Activated CD4-positive, alpha-beta memory T cell treated with anti-CD3 and anti-CD28 coated beads for 36 hours (primary cell): ENCODE measurements at regions of chr1 and their contacts with region 1.

Region 1: GRCh38 chr1:212477014-212477679 is 44.4 kb downstream of the NENF start:
- DNase-seq: peak; percentile 87
- H3K4me3 Mint-ChIP-seq: peak overlapping the region; percentile 11
- H3K27ac Mint-ChIP-seq: no peak overlapping the region
- H3K4me1 Mint-ChIP-seq: peaks cover 14% of the 10 kb centered on the region
- H3K27me3 Mint-ChIP-seq: peaks cover 6% of the 10 kb centered on the region

Region 2: GRCh38 chr1:211928993-211929637 is 548.0 kb before region 1 on chr1:
- CTCF ChIA-PET with region 1: no interaction called
- POLR2A ChIA-PET with region 1: no interaction called
- intact Hi-C with region 1: no loop called
- DNase-seq: no peak
- H3K4me3 Mint-ChIP-seq: no peak overlapping the region
- H3K27ac Mint-ChIP-seq: no peak overlapping the region
- H3K4me1 Mint-ChIP-seq: no peaks in the 10 kb centered on the region
- H3K27me3 Mint-ChIP-seq: peaks cover 3% of the 10 kb centered on the region

Region 3: GRCh38 chr1:212401838-212402582 is 75.1 kb before region 1 on chr1:
- CTCF ChIA-PET with region 1: no interaction called
- POLR2A ChIA-PET with region 1: no interaction called
- intact Hi-C with region 1: no loop called
- DNase-seq: no peak
- H3K4me3 Mint-ChIP-seq: no peak overlapping the region
- H3K27ac Mint-ChIP-seq: no peak overlapping the region
- H3K4me1 Mint-ChIP-seq: peaks cover 16% of the 10 kb centered on the region
- H3K27me3 Mint-ChIP-seq: no peaks in the 10 kb centered on the region

Region 4: GRCh38 chr1:212440419-212440818 is 36.7 kb before region 1 on chr1:
- CTCF ChIA-PET with region 1: no interaction called
- POLR2A ChIA-PET with region 1: no interaction called
- intact Hi-C with region 1: no loop called
- DNase-seq: no peak
- H3K4me3 Mint-ChIP-seq: no peak overlapping the region
- H3K27ac Mint-ChIP-seq: no peak overlapping the region
- H3K4me1 Mint-ChIP-seq: peaks cover 7% of the 10 kb centered on the region
- H3K27me3 Mint-ChIP-seq: no peaks in the 10 kb centered on the region

Region 5: DNA sequence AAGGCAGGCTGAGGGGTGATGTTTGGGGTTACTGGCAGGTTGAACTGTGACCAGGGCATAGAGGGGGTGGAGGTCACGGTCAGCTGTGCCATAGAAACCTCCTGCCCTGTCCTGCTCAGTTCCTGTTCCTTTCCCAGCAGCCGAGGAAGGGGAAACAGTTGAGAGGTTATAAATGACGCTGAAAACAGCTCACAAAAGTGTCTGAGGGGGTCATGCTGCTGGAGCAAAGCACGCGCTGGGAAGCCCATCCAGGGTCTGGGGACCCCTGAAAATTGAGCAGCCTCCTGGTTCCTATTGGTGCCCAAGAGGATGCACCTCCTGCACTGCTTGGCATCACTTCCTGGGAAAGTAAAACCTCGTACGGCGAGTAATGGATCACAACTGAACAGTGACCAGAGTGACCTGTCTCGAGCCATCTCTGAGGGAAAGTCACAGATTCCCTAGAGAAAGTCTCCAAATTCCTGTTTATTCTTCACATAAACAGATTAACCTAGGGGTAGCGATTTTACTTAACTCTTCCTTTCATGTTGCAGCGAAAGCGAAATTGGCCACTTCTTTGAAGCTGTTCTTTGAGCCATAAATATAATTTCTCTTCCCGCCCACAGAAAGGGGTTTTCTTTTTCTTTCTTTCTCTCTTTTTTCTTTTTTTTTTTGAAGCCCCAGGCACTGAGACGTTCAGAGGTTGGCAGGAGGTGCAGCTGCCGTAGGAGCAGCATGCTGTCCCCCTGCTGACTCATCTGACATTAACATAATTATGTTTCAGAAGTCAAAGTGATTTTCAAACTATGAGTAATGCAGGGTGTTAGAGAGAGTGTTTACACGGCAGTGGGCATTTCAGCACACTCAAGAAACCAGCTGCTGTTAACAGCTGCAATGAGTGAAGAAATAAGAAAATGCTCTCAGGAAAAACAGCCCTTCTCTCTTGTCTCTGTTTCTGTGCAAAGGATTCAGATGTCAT is 89.7 kb after region 1 on chr1:
- CTCF ChIA-PET with region 1: interaction called, 4 read pairs
- POLR2A ChIA-PET with region 1: interaction called, 4 read pairs
- intact Hi-C with region 1: loop called (anchors 2 kb)
- DNase-seq: peak; percentile 79
- H3K4me3 Mint-ChIP-seq: peak overlapping the region; percentile 73
- H3K27ac Mint-ChIP-seq: peak overlapping the region; percentile 82
- H3K4me1 Mint-ChIP-seq: peaks cover 33% of the 10 kb centered on the region
- H3K27me3 Mint-ChIP-seq: peaks cover 2% of the 10 kb centered on the region

Region 6: GRCh38 chr1:212608209-212608955 is 131.2 kb after region 1 on chr1 and contains the start of gene ATF3:
- CTCF ChIA-PET with region 1: interaction called, 21 read pairs
- POLR2A ChIA-PET with region 1: interaction called, 7 read pairs
- intact Hi-C with region 1: loop called (anchors 2 kb)
- DNase-seq: peak; percentile 97
- H3K4me3 Mint-ChIP-seq: peak within 1 kb of the TSS; percentile 91
- H3K27ac Mint-ChIP-seq: peak within 1 kb of the TSS; percentile 90
- H3K4me1 Mint-ChIP-seq: peaks cover 52% of the 10 kb centered on the region
- H3K27me3 Mint-ChIP-seq: peaks cover 36% of the 10 kb centered on the region
- total RNA-seq, gene ATF3: 49.7 to 51.5 TPM

Region 7: DNA sequence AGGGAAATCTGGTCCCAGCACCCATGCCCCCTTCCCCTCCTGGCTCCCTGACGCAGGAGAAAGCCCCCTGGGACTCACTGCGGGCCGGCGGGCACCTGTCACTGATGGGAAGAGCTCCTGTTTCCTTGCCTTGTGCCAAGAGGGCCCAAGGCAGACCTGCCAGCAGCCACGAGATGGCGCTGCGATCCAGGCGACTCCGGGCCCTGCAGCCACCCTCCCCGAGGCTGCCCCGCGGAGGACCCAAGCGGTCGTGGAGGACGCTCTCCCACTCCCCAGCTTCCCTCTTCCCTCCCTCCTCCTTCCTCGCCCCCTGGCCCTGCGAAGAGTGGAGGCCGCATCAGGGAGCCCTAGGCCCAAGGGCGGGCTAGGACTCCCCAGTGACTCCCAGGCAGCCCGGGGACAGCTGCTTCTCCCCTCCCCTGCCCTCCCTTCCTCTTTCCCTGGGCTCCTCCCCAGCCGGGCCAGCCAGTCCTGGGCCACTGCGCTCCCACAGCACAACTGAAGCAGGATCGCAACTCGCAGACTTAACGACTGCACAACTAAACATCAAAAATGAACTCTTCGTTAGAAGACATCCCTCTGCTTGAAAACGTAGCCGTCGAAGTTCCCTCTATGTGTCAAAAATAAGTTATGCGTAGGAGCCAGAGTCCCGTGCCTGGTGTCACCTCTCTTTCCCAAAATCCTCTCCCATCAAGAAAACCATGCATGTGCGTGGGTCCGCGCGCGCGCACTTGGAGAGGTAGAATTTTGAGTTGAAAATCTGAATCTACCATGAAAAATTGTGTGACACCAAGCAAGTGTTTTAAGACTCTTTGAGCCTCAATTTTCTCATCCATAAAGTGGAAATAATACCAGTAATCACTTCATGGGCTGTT is 188.3 kb after region 1 on chr1:
- CTCF ChIA-PET with region 1: interaction called, 43 read pairs
- POLR2A ChIA-PET with region 1: interaction called, 3 read pairs
- intact Hi-C with region 1: loop called (anchors 1 kb)
- DNase-seq: peak; percentile 88
- H3K4me3 Mint-ChIP-seq: peak overlapping the region; percentile 73
- H3K27ac Mint-ChIP-seq: peak overlapping the region; percentile 57
- H3K4me1 Mint-ChIP-seq: peaks cover 19% of the 10 kb centered on the region
- H3K27me3 Mint-ChIP-seq: peaks cover 3% of the 10 kb centered on the region

Region 8: DNA sequence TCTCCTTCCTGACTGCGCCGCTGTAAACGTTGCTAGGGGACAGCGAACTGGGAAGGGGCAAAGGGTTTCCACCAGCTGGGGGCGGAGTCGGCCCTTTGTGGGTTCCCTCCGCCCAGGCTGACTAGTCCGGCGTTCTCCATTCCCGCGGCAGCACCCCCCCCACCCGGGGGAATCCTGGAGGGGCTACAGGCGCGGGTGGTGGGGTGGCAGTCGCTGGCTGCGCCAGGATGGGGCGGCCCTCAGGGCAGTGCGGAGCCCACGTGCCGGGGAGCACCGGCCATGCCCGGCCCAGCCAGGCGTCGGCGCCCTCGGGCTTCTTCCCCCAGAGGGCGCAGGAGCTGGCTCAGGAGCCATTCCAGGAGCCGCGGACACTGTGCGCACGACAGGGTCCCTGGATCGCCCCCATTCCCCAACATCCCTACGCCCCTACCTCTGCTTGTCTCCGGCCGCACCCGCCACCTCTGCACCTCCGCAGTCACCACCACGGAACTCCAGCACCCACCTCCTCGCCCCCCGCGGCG is 222.0 kb after region 1 on chr1:
- CTCF ChIA-PET with region 1: interaction called, 6 read pairs
- POLR2A ChIA-PET with region 1: no interaction called
- intact Hi-C with region 1: loop called (anchors 5 kb)
- DNase-seq: peak; percentile 79
- H3K4me3 Mint-ChIP-seq: peak overlapping the region; percentile 90
- H3K27ac Mint-ChIP-seq: peak overlapping the region; percentile 95
- H3K4me1 Mint-ChIP-seq: peaks cover 71% of the 10 kb centered on the region
- H3K27me3 Mint-ChIP-seq: peaks cover 2% of the 10 kb centered on the region

Region 9: GRCh38 chr1:212791676-212792395 is 314.7 kb after region 1 on chr1 and contains the starts of genes NSL1 and TATDN3:
- CTCF ChIA-PET with region 1: interaction called, 15 read pairs
- POLR2A ChIA-PET with region 1: interaction called, 3 read pairs
- intact Hi-C with region 1: no loop called
- DNase-seq: peak; percentile 97
- H3K4me3 Mint-ChIP-seq: peak within 1 kb of the TSS; percentile 95
- H3K27ac Mint-ChIP-seq: peak within 1 kb of the TSS; percentile 82
- H3K4me1 Mint-ChIP-seq: peaks cover 32% of the 10 kb centered on the region
- H3K27me3 Mint-ChIP-seq: no peaks in the 10 kb centered on the region
- total RNA-seq, gene NSL1: 39.8 to 41.8 TPM
- total RNA-seq, gene TATDN3: 19.2 to 20.7 TPM